ENCODE measurements at regions of chr2 and their contacts with region 1.

Region 1: GRCh38 chr2:96305091-96305978 is at the start of gene SNRNP200:
- DNase-seq: peak; percentile 88 to 89
- ATAC-seq: peak; percentile 97 to 100 (median 99)
- H3K4me3 ChIP-seq: peak within 1 kb of the TSS; percentile 57 to 94 (median 74)
- H3K27ac ChIP-seq: peak within 1 kb of the TSS; percentile 5 to 96 (median 86)
- H3K4me1 ChIP-seq: peaks cover 6 to 40% (median 24%) of the 10 kb centered on the region in 9 donors
- H3K27me3 ChIP-seq: no peaks in the 10 kb centered on the region
- CTCF ChIP-seq: no peak
- total RNA-seq, gene SNRNP200: 56.2 to 70.5 (median 63.6) TPM

Region 2: GRCh38 chr2:96233880-96234316 is 71.4 kb before region 1 on chr2:
- intact Hi-C with region 1: no loop called
- DNase-seq: no peak
- ATAC-seq: no peak
- H3K4me3 ChIP-seq: no peak overlapping the region
- H3K27ac ChIP-seq: peak overlapping the region in 1 of 10 donors; percentile 39
- H3K4me1 ChIP-seq: peaks cover 0 to 16% (median 0%) of the 10 kb centered on the region in 9 donors
- H3K27me3 ChIP-seq: no peaks in the 10 kb centered on the region
- CTCF ChIP-seq: no peak

Region 3: GRCh38 chr2:96342085-96342484 is 36.8 kb after region 1 on chr2:
- intact Hi-C with region 1: no loop called
- DNase-seq: no peak
- ATAC-seq: no peak
- H3K4me3 ChIP-seq: no peak overlapping the region
- H3K27ac ChIP-seq: peak overlapping the region in 1 of 10 donors; percentile 56
- H3K4me1 ChIP-seq: peaks cover 0 to 15% (median 0%) of the 10 kb centered on the region in 9 donors
- H3K27me3 ChIP-seq: no peaks in the 10 kb centered on the region
- CTCF ChIP-seq: no peak

Region 4: GRCh38 chr2:96353032-96353561 is 47.8 kb after region 1 on chr2:
- intact Hi-C with region 1: loop called in 2 of 10 experiments (anchors 2 to 5 kb)
- DNase-seq: peak; percentile 70 to 77
- ATAC-seq: peak; percentile 32 to 78 (median 57)
- H3K4me3 ChIP-seq: no peak overlapping the region
- H3K27ac ChIP-seq: peak overlapping the region in 9 of 10 donors; percentile 8 to 89 (median 73)
- H3K4me1 ChIP-seq: peaks cover 0 to 36% (median 18%) of the 10 kb centered on the region in 9 donors
- H3K27me3 ChIP-seq: no peaks in the 10 kb centered on the region
- CTCF ChIP-seq: no peak